PC-9 (cell line): ENCODE measurements at regions of chr16 and their contacts with region 1.

Region 1: GRCh38 chr16:17544785-17545184 is 74.0 kb upstream of the XYLT1 start:
- DNase-seq: no peak
- H3K4me3 ChIP-seq: no peak overlapping the region
- H3K27ac ChIP-seq: no peak overlapping the region
- H3K4me1 ChIP-seq: no peaks in the 10 kb centered on the region
- H3K27me3 ChIP-seq: no peaks in the 10 kb centered on the region
- CTCF ChIP-seq: peak; percentile 51

Region 2: DNA sequence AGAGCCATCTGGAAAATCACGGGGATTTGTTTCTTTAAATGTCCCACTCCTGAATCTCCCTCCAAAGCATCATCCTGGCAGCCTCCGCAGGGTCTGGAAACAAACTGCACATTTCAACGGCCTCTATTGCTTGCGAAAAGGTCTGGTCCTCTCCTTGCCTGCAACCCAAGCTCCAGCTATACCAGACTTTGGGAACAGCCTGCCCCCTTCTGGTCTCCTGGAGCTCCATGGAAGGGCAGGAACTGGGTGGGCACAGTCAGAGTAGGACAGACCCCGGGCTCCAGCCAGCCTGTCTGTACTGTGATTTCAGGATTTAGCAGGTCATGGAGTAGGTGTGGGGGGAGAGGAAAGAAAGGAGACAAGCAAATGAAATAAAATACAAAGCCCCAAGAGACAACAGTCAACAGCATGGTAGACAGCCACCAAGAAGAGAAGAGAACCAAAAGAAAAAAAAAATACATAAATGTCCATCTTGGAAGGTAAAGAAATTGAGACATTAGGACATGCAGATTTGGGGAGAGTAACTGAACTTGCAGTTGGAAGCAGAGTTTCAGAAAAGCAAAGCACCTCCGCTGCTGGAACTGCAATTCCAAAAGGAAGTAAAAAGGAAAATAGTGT is 76.8 kb before region 1 on chr16:
- CTCF ChIA-PET with region 1: no interaction called
- POLR2A ChIA-PET with region 1: no interaction called
- intact Hi-C with region 1: no loop called
- DNase-seq: no peak
- H3K4me3 ChIP-seq: no peak overlapping the region
- H3K27ac ChIP-seq: no peak overlapping the region
- H3K4me1 ChIP-seq: no peaks in the 10 kb centered on the region
- H3K27me3 ChIP-seq: peaks cover 9% of the 10 kb centered on the region; the same call in 1 of the 2 replicates
- CTCF ChIP-seq: peak; percentile 47

Region 3: DNA sequence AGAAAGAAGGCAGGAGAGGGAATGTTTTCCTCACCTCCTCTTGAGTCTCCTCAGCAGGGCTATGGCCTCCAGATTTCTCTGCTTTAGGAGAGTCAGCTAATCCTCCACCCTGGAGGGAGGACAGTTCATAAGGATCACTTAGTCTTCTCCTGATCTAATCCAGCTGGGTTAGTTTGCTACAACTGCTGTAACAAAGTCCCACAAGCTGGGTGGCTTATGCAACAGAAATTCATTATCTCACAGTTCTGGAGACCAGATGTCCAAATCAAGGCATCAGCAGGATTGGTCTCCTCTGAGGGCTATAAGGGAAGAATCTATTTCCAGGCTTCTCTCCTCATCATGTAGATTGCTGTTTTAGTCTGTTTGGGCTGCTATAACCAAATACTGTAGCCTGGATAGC is 33.4 kb before region 1 on chr16:
- CTCF ChIA-PET with region 1: no interaction called
- POLR2A ChIA-PET with region 1: no interaction called
- intact Hi-C with region 1: no loop called
- DNase-seq: no peak
- H3K4me3 ChIP-seq: no peak overlapping the region
- H3K27ac ChIP-seq: no peak overlapping the region
- H3K4me1 ChIP-seq: no peaks in the 10 kb centered on the region
- H3K27me3 ChIP-seq: no peaks in the 10 kb centered on the region
- CTCF ChIP-seq: no peak

Region 4: DNA sequence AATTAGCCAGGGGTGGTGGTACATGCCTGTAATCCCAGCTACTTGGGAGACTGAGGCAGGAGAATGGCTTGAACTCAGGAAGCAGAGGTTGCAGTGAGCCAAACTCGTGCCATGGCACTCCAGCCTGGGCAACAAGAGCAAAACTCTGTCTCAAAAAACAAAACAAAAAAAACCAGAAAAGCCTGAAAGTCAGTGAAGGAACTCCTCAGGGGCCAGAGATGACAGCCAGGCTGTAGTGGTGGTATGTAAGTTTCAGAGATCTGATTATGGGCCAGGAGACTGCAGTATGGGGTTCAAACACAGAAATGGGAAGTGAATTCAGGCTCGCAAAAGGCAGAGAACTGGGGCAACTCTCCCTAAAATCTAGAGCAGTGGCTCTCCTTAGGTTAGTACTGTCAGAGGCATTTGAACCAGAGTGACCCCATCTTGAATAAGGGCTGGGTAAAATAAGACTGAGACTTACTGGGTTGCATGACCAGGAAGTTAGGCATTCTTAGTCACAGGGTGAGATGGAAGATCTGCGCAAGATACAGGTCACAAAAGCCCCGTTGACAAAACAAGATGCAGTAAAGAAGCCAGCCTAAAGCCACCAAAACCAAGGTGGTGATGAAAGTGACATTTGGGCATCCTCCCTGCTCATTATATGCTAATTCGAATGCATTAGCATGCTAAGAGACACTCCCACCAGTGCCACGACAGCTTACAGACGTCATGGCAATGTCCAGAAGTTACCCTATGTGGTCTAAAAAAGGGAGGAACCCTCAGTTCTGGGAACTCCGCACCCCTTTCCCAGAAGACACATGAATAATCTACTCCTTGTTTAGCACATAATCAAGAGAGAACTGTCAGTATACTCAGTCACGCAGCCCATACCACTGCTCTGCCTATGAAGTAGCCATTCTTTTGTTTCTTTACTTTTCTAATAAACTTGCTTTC is 46.2 kb after region 1 on chr16:
- CTCF ChIA-PET with region 1: no interaction called
- POLR2A ChIA-PET with region 1: no interaction called
- intact Hi-C with region 1: loop called (anchors 5 kb)
- DNase-seq: no peak
- H3K4me3 ChIP-seq: no peak overlapping the region
- H3K27ac ChIP-seq: no peak overlapping the region
- H3K4me1 ChIP-seq: no peaks in the 10 kb centered on the region
- H3K27me3 ChIP-seq: no peaks in the 10 kb centered on the region
- CTCF ChIP-seq: no peak